ENCODE measurements at regions of chr1 and their contacts with region 1.

Region 1: GRCh38 chr1:150765296-150765976 is at the start of gene CTSS:
- DNase-seq: no peak
- ATAC-seq: peak; percentile 44; the same call in 1 of the 3 replicates
- H3K4me3 ChIP-seq: peak within 1 kb of the TSS; percentile 20 to 46 (median 24); a peak in 5 of 6 replicates
- H3K27ac ChIP-seq: peak within 1 kb of the TSS; percentile 15
- H3K4me1 ChIP-seq: peaks cover 25% of the 10 kb centered on the region
- H3K27me3 ChIP-seq: no peaks in the 10 kb centered on the region; a peak in 1 of 5 replicates
- CTCF ChIP-seq: no peak
- EP300 ChIP-seq: no peak
- POLR2A ChIP-seq: no peak
- RAD21 ChIP-seq: no peak
- total RNA-seq, gene CTSS: 1.0 and 1.3 TPM in 2 replicates

Region 2: GRCh38 chr1:150718225-150718891 is 47.1 kb before region 1 on chr1:
- CTCF ChIA-PET with region 1: no interaction called
- POLR2A ChIA-PET with region 1: no interaction called
- in situ Hi-C with region 1: no loop called
- intact Hi-C with region 1: loop called (anchors 10 kb)
- DNase-seq: no peak
- ATAC-seq: no peak
- H3K4me3 ChIP-seq: no peak overlapping the region
- H3K27ac ChIP-seq: no peak overlapping the region
- H3K4me1 ChIP-seq: no peaks in the 10 kb centered on the region
- H3K27me3 ChIP-seq: no peaks in the 10 kb centered on the region; a peak in 1 of 5 replicates
- CTCF ChIP-seq: no peak
- EP300 ChIP-seq: no peak
- POLR2A ChIP-seq: no peak
- RAD21 ChIP-seq: no peak

Region 3: DNA sequence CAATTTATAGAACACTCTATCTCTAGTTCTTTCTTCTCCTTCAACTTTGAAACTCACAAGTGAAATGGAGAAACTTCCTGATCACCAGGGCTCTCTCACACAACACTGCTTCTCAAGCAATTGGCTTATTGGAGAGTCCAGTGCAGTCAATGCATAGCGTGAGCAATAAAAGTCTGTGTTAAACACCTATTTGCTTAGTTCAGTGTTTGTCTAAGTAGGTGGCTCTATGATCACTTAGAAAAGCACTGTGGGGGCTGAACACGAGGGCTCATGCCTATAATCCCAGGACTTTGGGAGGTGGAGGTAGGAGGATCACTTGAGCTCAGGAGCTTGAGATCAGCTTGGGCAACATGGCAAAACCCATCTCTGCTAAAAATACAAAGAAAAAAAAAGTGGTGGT is 12.0 kb before region 1 on chr1:
- CTCF ChIA-PET with region 1: no interaction called
- POLR2A ChIA-PET with region 1: no interaction called
- in situ Hi-C with region 1: no loop called
- intact Hi-C with region 1: no loop called
- DNase-seq: no peak
- ATAC-seq: no peak
- H3K4me3 ChIP-seq: no peak overlapping the region
- H3K27ac ChIP-seq: no peak overlapping the region
- H3K4me1 ChIP-seq: no peaks in the 10 kb centered on the region
- H3K27me3 ChIP-seq: no peaks in the 10 kb centered on the region
- CTCF ChIP-seq: no peak
- EP300 ChIP-seq: no peak
- POLR2A ChIP-seq: no peak
- RAD21 ChIP-seq: no peak

Region 4: DNA sequence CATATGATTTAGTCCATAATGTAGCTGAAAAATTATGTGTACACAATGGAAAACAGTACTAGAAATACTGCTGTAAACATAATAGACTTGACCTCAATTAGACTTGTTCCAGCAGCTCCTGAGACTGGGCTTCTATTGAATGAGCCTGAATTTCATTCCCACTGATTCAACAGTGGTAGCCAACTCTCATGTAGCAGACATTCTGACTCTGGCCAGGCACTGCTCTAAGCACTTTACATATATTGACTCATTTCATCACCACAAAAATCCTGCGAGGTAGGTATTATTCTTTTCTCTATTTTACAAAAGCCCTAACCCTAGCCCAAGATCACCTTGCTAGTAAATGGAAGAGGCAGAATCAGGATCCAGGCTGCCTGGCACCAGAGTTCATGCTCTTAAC is 13.0 kb after region 1 on chr1:
- CTCF ChIA-PET with region 1: no interaction called
- POLR2A ChIA-PET with region 1: no interaction called
- in situ Hi-C with region 1: no loop called
- intact Hi-C with region 1: no loop called
- DNase-seq: no peak
- ATAC-seq: no peak
- H3K4me3 ChIP-seq: no peak overlapping the region
- H3K27ac ChIP-seq: no peak overlapping the region
- H3K4me1 ChIP-seq: no peaks in the 10 kb centered on the region
- H3K27me3 ChIP-seq: no peaks in the 10 kb centered on the region
- CTCF ChIP-seq: no peak
- EP300 ChIP-seq: no peak
- POLR2A ChIP-seq: no peak
- RAD21 ChIP-seq: no peak

Region 5: DNA sequence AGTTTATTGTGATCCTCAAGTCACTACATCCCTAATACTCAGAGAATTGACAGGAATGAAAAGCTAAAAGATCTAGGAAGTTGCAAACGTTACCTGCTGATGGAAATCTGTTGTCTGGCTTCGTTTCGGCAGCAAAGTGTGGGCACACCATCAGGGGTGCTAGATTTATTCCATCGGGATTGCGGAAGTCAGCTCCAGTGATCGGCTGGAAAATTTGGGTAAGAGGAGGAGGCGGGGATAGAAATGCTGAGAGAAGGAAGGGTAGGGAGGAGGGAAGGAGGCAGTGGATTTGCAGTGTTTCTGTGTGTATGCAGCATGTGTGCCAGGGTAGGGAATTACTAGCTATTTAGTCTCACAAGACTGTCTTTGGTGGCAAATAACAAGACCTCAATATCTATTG is 42.7 kb after region 1 on chr1 and contains the start of gene CTSK:
- CTCF ChIA-PET with region 1: no interaction called
- POLR2A ChIA-PET with region 1: no interaction called
- in situ Hi-C with region 1: no loop called
- intact Hi-C with region 1: no loop called
- DNase-seq: no peak
- ATAC-seq: no peak
- H3K4me3 ChIP-seq: no peak within 1 kb of the TSS
- H3K27ac ChIP-seq: no peak within 1 kb of the TSS
- H3K4me1 ChIP-seq: peaks cover 14% of the 10 kb centered on the region
- H3K27me3 ChIP-seq: no peaks in the 10 kb centered on the region
- CTCF ChIP-seq: no peak
- EP300 ChIP-seq: no peak
- POLR2A ChIP-seq: no peak
- RAD21 ChIP-seq: no peak
- total RNA-seq, gene CTSK: 0.62 and 1.4 TPM in 2 replicates

Measured in HepG2 (cell line).